ENCODE measurements at regions of chr7 and their contacts with region 1.

Region 1: DNA sequence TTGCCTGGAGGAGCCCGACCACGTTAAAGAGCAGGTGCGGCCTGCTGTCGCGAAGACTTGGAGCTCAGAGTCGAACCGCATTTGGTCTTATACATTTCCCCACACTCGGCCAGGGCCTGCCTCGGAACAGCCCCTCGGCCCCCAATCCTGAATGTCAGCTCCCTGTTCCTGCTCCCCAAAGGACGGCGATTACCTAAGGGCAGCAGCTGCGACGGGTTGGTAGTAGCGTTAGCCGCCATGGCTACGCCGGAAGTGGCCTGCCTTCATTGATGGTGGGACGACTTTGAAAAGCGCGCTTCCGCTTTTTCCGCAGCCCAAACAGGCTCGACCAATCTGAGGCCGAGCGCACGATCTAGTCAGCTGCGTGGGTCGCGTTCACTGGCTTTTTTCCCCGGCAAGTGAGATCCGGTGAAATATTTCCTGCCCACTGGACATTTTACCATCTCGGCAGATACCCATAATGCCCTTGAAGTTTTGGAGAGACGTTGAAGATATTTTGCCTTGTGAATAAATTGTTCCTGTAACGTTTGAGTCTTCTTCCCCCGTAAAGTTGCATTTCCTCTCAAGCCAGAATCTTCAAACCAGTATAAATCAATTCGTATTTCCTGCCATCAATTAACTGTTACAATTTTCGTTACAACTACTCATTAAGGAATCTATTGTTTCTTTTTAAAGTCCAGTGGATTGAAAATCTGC is at the start of gene LSM5:
- DNase-seq: peak; percentile 77 to 91 (median 89)
- ATAC-seq: peak; percentile 84
- H3K4me3 ChIP-seq: peak within 1 kb of the TSS; percentile 86
- H3K4me3 Mint-ChIP-seq: peak within 1 kb of the TSS; percentile 83 to 98 (median 92)
- H3K27ac ChIP-seq: peak within 1 kb of the TSS; percentile 87
- H3K27ac Mint-ChIP-seq: peak within 1 kb of the TSS; percentile 90 to 98 (median 96)
- H3K4me1 ChIP-seq: peaks cover 8 to 13% of the 10 kb centered on the region in 2 donors
- H3K4me1 Mint-ChIP-seq: peaks cover 12 to 43% (median 31%) of the 10 kb centered on the region in 7 donors
- H3K27me3 ChIP-seq: no peaks in the 10 kb centered on the region
- H3K27me3 Mint-ChIP-seq: no peaks in the 10 kb centered on the region
- total RNA-seq, gene LSM5: 21.5 to 58.8 (median 39.4) TPM

Region 2: GRCh38 chr7:32428546-32428945 is 61.7 kb before region 1 on chr7:
- CTCF ChIA-PET with region 1: no interaction called
- POLR2A ChIA-PET with region 1: no interaction called
- intact Hi-C with region 1: no loop called
- DNase-seq: no peak
- ATAC-seq: no peak
- H3K4me3 ChIP-seq: no peak overlapping the region
- H3K4me3 Mint-ChIP-seq: peak overlapping the region in 1 of 10 donors; percentile 13
- H3K27ac ChIP-seq: no peak overlapping the region
- H3K27ac Mint-ChIP-seq: peak overlapping the region in 1 of 9 donors; percentile 78
- H3K4me1 ChIP-seq: no peaks in the 10 kb centered on the region
- H3K4me1 Mint-ChIP-seq: peaks cover 0 to 3% (median 0%) of the 10 kb centered on the region in 7 donors
- H3K27me3 ChIP-seq: peaks cover 0 to 9% of the 10 kb centered on the region in 2 donors
- H3K27me3 Mint-ChIP-seq: peaks cover 27 to 74% (median 71%) of the 10 kb centered on the region in 5 donors

Region 3: GRCh38 chr7:32639122-32639521 is 148.8 kb after region 1 on chr7:
- CTCF ChIA-PET with region 1: no interaction called
- POLR2A ChIA-PET with region 1: no interaction called
- intact Hi-C with region 1: loop called in 1 of 2 experiments (anchors 1 kb)
- DNase-seq: no peak
- ATAC-seq: no peak
- H3K4me3 ChIP-seq: no peak overlapping the region
- H3K4me3 Mint-ChIP-seq: no peak overlapping the region
- H3K27ac ChIP-seq: no peak overlapping the region
- H3K27ac Mint-ChIP-seq: no peak overlapping the region
- H3K4me1 ChIP-seq: no peaks in the 10 kb centered on the region
- H3K4me1 Mint-ChIP-seq: peaks cover 0 to 15% (median 3%) of the 10 kb centered on the region in 7 donors
- H3K27me3 ChIP-seq: no peaks in the 10 kb centered on the region
- H3K27me3 Mint-ChIP-seq: peaks cover 0 to 9% (median 3%) of the 10 kb centered on the region in 5 donors

Region 4: DNA sequence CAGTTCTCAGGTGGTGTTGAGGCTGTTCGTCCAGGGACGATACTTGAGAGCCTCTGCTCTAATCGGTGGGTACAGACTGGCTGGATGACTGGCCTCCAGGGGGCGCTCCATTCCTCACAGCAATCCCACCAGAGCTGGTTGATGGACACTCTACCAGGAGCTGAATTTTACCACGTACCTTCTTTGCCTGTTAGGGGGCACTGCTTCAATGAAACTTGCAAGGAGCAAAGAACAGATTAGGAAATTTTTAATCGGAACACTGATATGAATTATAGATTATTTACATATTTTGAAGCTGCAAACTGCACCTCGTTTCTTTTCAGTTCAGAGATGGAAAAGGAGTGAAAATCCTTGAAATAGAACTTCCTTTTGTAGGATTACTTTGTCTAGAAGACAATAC is 356.4 kb after region 1 on chr7:
- CTCF ChIA-PET with region 1: no interaction called
- POLR2A ChIA-PET with region 1: no interaction called
- intact Hi-C with region 1: loop called in 1 of 2 experiments (anchors 1 kb)
- DNase-seq: peak; percentile 77 to 89 (median 86)
- ATAC-seq: peak; percentile 100
- H3K4me3 ChIP-seq: no peak overlapping the region
- H3K4me3 Mint-ChIP-seq: peak overlapping the region in 6 of 10 donors; percentile 15 to 42 (median 30)
- H3K27ac ChIP-seq: no peak overlapping the region
- H3K27ac Mint-ChIP-seq: peak overlapping the region in 1 of 9 donors; percentile 33
- H3K4me1 ChIP-seq: peaks cover 7% of the 10 kb centered on the region in 2 donors
- H3K4me1 Mint-ChIP-seq: peaks cover 6 to 10% (median 9%) of the 10 kb centered on the region in 7 donors
- H3K27me3 ChIP-seq: peaks cover 0 to under 1% of the 10 kb centered on the region in 2 donors
- H3K27me3 Mint-ChIP-seq: peaks cover 12 to 44% (median 23%) of the 10 kb centered on the region in 5 donors